Calu3 (cell line): ENCODE measurements at regions of chrX and their contacts with region 1.

Region 1: DNA sequence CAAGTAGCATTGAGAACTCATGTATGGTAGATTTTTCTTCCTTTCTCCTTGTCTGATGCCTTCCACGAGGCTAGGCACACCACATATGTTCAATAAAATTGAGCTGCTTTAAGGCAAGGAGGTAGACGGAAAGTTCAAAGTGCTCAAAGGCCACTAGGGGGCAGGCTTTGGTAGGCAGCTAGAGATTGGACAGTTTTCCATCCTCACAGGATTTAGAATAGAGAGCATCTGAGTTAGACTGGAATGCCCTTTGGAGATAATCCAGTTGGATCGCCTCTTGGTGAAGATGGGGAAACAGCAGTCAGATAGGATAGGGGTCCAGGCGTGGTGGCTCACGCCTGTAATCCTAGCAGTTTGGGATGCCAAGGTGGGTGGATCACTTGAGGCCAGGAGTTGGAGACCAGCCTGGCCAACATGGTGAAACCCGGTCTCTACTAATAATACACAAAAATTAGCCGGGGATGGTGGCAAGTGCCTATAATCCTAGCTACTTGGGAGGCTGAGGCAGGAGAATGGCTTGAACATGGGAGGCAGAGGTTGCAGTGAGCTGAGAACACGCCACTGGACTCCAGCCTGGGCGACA is 30.4 kb downstream of the ELF4 start:
- DNase-seq: peak; percentile 61
- H3K4me3 Mint-ChIP-seq: no peak overlapping the region
- H3K27ac Mint-ChIP-seq: peak overlapping the region; percentile 20
- H3K4me1 Mint-ChIP-seq: no peaks in the 10 kb centered on the region
- H3K27me3 Mint-ChIP-seq: no peaks in the 10 kb centered on the region
- CTCF ChIP-seq: peak; percentile 68

Region 2: GRCh38 chrX:130120746-130121504 is 41.0 kb after region 1 on chrX:
- CTCF ChIA-PET with region 1: interaction called, 5 read pairs
- intact Hi-C with region 1: loop called (anchors 1 kb)
- DNase-seq: peak; percentile 65
- H3K4me3 Mint-ChIP-seq: peak overlapping the region; percentile 60
- H3K27ac Mint-ChIP-seq: no peak overlapping the region
- H3K4me1 Mint-ChIP-seq: peaks cover 21% of the 10 kb centered on the region
- H3K27me3 Mint-ChIP-seq: no peaks in the 10 kb centered on the region
- CTCF ChIP-seq: peak; percentile 70

Region 3: GRCh38 chrX:130144509-130144908 is 64.6 kb after region 1 on chrX:
- CTCF ChIA-PET with region 1: no interaction called
- intact Hi-C with region 1: loop called (anchors 5 kb)
- DNase-seq: no peak
- H3K4me3 Mint-ChIP-seq: no peak overlapping the region
- H3K27ac Mint-ChIP-seq: no peak overlapping the region
- H3K4me1 Mint-ChIP-seq: no peaks in the 10 kb centered on the region
- H3K27me3 Mint-ChIP-seq: no peaks in the 10 kb centered on the region
- CTCF ChIP-seq: no peak

Region 4: DNA sequence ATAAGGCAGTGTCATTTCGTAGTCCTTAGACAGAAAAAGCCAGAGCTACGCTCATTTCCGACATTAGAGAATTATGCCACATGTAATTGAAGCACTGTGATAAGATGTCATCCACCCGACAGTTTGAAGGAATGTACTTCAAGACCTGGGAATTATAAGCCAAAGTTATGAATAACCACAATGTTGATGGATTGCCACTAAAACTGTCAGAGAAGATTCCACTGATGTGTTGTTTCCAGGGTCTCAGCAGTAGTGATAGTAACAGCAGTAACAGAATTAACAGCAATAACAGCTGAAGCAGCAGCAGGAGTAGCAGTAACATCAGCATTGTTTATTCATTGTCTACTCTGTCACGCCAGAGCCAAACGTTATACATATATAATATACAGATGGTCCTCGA is 116.6 kb after region 1 on chrX:
- CTCF ChIA-PET with region 1: interaction called, 4 read pairs
- intact Hi-C with region 1: loop called (anchors 1 kb)
- DNase-seq: no peak
- H3K4me3 Mint-ChIP-seq: no peak overlapping the region
- H3K27ac Mint-ChIP-seq: no peak overlapping the region
- H3K4me1 Mint-ChIP-seq: no peaks in the 10 kb centered on the region
- H3K27me3 Mint-ChIP-seq: no peaks in the 10 kb centered on the region
- CTCF ChIP-seq: no peak

Region 5: GRCh38 chrX:130304587-130305368 is 224.9 kb after region 1 on chrX:
- CTCF ChIA-PET with region 1: no interaction called
- intact Hi-C with region 1: no loop called
- DNase-seq: no peak
- H3K4me3 Mint-ChIP-seq: no peak overlapping the region
- H3K27ac Mint-ChIP-seq: no peak overlapping the region
- H3K4me1 Mint-ChIP-seq: no peaks in the 10 kb centered on the region
- H3K27me3 Mint-ChIP-seq: no peaks in the 10 kb centered on the region
- CTCF ChIP-seq: no peak